ENCODE measurements at regions of chr3 and their contacts with region 1.

Region 1: DNA sequence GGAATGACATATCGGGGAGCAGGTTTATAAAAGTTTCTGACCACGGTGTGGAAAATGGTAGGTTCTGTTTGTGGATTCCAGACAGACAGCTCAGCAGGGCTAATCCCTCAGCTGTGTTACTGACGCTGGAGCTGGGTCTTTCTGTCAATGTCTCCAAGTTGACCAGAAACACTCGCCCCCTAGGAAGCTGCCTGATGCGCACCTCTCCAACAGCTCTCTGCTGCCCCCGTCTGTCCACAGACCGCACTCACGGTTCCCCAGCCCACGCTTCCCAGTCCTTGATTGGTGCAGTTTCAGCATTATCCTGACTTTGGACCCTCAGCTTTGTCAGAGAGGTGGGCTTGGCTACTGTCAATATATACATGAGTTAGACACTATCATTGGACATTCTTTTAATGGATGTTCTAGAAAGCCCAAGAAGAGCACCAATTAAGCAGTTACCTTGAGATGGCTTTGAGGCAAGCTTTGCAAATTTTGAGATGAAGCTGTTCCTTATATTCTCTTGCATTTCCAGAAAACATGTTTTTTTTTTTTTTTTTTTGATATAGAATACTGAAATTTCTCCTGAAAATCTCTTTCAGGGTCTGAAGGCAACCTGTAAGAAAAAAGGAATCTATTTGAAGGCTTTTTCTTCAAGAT is 98.9 kb upstream of the TBC1D5 start:
- DNase-seq: peak; percentile 64
- H3K4me3 ChIP-seq: no peak overlapping the region
- H3K27ac ChIP-seq: no peak overlapping the region
- H3K4me1 ChIP-seq: no peaks in the 10 kb centered on the region
- H3K27me3 ChIP-seq: peaks cover 0 to under 1% of the 10 kb centered on the region in 2 experiments
- CTCF ChIP-seq: peak; percentile 96
- POLR2A ChIP-seq: no peak

Region 2: DNA sequence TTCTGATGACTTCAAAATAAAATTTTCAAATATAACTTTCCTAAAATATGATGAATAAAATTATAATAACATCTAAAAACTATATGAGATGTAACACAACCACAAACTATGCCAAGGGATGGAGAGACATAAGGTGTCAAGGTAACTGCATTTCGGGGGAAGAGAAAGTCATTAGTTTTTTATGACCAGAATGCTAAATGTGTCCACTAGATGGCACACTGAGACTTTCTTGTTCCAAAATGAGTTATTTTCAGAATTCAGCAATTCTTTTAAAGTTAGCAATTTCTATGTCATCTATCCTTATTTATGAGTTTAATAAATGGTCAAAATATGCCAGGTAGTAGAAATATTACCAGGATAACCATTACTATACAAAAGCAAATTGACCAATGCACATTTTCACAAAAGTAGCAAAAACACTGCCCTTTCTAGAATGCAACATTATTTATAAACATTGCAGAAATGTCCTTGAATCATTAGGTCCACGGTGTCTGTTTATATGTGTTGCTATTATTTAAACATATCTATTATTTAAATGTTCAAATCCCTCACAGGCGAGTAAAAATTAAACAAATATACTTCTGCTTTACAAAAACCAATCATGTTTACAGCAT is 582.4 kb before region 1 on chr3:
- CTCF ChIA-PET with region 1: interaction called, 20 read pairs
- POLR2A ChIA-PET with region 1: no interaction called
- dilution Hi-C with region 1: no loop called
- intact Hi-C with region 1: loop called (anchors 1 kb)
- DNase-seq: peak; percentile 51
- H3K4me3 ChIP-seq: no peak overlapping the region
- H3K27ac ChIP-seq: no peak overlapping the region
- H3K4me1 ChIP-seq: no peaks in the 10 kb centered on the region
- H3K27me3 ChIP-seq: no peaks in the 10 kb centered on the region
- CTCF ChIP-seq: peak; percentile 55
- POLR2A ChIP-seq: no peak

Region 3: DNA sequence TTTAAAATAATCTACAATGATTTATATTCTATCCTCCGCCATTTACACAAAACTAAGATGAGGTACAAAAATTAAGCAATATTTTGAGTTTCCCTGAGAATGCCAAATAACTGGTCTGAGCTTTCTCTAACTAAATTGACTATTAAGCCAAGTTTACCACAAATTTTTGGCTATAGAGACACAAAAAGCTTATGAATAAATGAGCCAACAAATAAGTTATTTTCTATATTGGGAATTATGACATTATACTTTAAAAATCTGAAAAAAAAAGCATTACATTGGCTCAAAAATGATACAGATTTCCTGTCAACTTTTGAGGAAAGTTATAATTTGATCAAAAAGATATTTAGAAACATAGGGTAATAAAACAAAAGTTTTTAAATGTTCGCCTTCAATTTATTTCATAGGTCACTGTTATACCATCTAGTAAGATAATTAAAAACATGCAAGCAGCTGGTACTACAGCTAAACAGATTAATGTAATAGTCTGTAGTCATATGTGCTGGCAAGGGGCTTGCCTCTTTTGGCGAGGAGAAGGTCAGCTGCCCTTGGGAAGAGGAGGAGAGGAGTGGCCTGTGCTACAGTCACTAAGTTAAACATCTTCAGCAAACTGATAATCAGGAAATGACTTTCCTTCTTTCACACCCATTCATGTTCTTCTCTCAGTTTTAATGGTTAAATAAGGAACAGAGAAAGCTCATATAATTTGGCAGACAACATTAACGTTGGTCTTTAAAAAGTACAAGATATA is 417.3 kb before region 1 on chr3:
- CTCF ChIA-PET with region 1: interaction called, 152 read pairs
- POLR2A ChIA-PET with region 1: no interaction called
- dilution Hi-C with region 1: loop called (anchors 25 kb)
- intact Hi-C with region 1: no loop called
- DNase-seq: no peak
- H3K4me3 ChIP-seq: no peak overlapping the region
- H3K27ac ChIP-seq: no peak overlapping the region
- H3K4me1 ChIP-seq: no peaks in the 10 kb centered on the region
- H3K27me3 ChIP-seq: no peaks in the 10 kb centered on the region
- CTCF ChIP-seq: no peak
- POLR2A ChIP-seq: no peak

Region 4: DNA sequence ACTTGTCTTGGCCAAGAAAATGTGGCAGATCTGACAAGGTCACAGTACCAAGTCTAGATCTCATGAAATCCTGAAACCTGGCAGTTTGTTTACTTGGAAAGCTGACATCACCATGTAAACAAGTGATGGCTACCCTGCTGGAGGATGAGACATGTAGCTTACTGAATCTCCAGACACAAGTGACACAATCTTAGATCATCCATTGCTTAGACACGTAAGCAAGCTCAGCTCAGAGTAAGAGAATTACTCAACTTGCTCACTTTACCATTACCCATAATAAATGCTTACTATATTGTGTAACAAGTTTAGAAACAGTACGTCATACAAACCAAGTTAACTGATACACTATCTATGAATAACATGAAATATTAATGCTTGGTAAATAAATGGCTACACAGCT is 362.6 kb before region 1 on chr3:
- CTCF ChIA-PET with region 1: interaction called, 20 read pairs
- POLR2A ChIA-PET with region 1: no interaction called
- dilution Hi-C with region 1: no loop called
- intact Hi-C with region 1: loop called (anchors 1 kb)
- DNase-seq: no peak
- H3K4me3 ChIP-seq: no peak overlapping the region
- H3K27ac ChIP-seq: no peak overlapping the region
- H3K4me1 ChIP-seq: no peaks in the 10 kb centered on the region
- H3K27me3 ChIP-seq: no peaks in the 10 kb centered on the region
- CTCF ChIP-seq: no peak
- POLR2A ChIP-seq: no peak

Region 5: GRCh38 chr3:17742108-17742879 is 99.0 kb before region 1 on chr3 and contains the start of gene TBC1D5:
- CTCF ChIA-PET with region 1: interaction called, 14 read pairs
- POLR2A ChIA-PET with region 1: no interaction called
- dilution Hi-C with region 1: no loop called
- intact Hi-C with region 1: loop called (anchors 1 kb)
- DNase-seq: peak; percentile 99
- H3K4me3 ChIP-seq: peak within 1 kb of the TSS; percentile 57 to 92 (median 72)
- H3K27ac ChIP-seq: peak within 1 kb of the TSS; percentile 81
- H3K4me1 ChIP-seq: peaks cover 27% of the 10 kb centered on the region
- H3K27me3 ChIP-seq: no peaks in the 10 kb centered on the region
- CTCF ChIP-seq: no peak
- POLR2A ChIP-seq: peak; percentile 82
- total RNA-seq, gene TBC1D5: 40.1 and 44.7 TPM in 2 replicates

Region 6: GRCh38 chr3:17782751-17783150 is 58.6 kb before region 1 on chr3:
- CTCF ChIA-PET with region 1: no interaction called
- POLR2A ChIA-PET with region 1: no interaction called
- dilution Hi-C with region 1: no loop called
- intact Hi-C with region 1: no loop called
- DNase-seq: no peak
- H3K4me3 ChIP-seq: no peak overlapping the region
- H3K27ac ChIP-seq: no peak overlapping the region
- H3K4me1 ChIP-seq: no peaks in the 10 kb centered on the region
- H3K27me3 ChIP-seq: no peaks in the 10 kb centered on the region
- CTCF ChIP-seq: no peak
- POLR2A ChIP-seq: no peak

Region 7: DNA sequence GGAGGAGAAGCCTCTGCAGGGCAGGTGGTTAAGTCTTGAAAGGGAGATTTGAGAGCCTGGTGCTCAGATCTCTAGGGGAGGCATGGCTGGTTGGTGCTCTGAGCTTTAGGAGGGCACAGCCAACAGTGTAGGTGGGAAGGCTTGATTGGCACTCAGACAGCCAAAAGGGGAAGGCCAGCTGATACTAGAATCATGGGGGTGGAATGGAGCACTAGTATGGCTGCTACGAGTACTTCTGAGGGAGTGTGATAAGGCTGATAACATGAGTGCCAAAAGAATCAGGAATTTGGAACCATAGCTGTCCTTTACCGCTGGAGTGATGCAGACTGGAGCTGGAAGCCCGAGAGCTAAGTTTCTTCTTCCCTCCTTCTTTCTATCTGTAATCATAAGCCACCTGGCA is 85.7 kb after region 1 on chr3:
- CTCF ChIA-PET with region 1: no interaction called
- POLR2A ChIA-PET with region 1: no interaction called
- dilution Hi-C with region 1: no loop called
- intact Hi-C with region 1: no loop called
- DNase-seq: no peak
- H3K4me3 ChIP-seq: no peak overlapping the region
- H3K27ac ChIP-seq: no peak overlapping the region
- H3K4me1 ChIP-seq: no peaks in the 10 kb centered on the region
- H3K27me3 ChIP-seq: no peaks in the 10 kb centered on the region
- CTCF ChIP-seq: no peak
- POLR2A ChIP-seq: no peak